B cell (primary cell): ENCODE measurements at regions of chr2 and their contacts with region 1.

Region 1: DNA sequence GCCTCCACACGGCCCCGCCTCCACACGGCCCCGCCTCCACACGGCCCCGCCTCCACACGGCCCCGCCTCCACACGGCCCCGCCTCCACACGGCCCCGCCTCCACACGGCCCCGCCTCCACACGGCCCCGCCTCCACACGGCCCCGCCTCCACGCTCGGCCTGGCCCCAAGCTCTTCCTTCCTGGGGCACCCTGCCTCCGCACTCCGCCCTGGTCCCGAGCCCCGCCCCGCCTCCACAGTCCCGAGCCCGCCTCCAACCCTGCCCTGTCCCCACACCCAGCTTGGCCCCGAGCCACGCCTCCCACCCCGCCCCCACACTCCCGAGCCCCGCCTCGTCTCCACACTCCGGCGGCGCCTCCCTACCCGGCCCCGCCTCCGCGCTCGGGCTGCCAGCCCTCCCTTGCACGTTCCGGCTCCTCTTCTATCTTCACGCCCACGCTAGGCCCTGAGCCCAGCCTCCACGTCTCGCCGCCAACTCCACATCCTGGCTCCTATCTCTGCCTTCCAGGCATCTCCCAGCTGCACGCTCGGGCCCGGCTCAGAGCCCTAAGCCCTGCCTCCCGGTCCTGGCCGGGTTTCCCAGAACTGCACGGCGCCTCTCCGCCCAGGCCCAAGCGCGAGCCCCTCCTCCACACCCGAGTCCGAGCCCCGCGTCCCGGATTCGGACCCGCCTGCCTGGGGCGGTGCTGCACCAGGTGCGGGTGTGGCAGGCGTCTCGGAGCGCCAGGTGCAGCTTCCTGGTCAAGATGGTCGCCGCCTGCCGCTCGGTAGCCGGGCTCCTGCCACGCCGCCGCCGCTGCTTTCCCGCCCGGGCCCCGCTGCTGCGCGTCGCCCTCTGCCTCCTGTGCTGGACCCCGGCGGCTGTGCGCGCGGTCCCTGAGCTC is at the start of gene TMEM87B:
- DNase-seq: peak; percentile 97
- ATAC-seq: peak; percentile 70
- H3K4me3 ChIP-seq: peak within 1 kb of the TSS; percentile 47 to 94 (median 87)
- H3K4me3 Mint-ChIP-seq: peak within 1 kb of the TSS; percentile 99
- H3K27ac ChIP-seq: peak within 1 kb of the TSS; percentile 80 to 87
- H3K27ac Mint-ChIP-seq: peak within 1 kb of the TSS; percentile 98
- H3K4me1 ChIP-seq: peaks cover 18 to 19% of the 10 kb centered on the region in 2 donors
- H3K4me1 Mint-ChIP-seq: peaks cover 41% of the 10 kb centered on the region
- H3K27me3 ChIP-seq: no peaks in the 10 kb centered on the region
- H3K27me3 Mint-ChIP-seq: no peaks in the 10 kb centered on the region
- CTCF ChIP-seq: no peak
- total RNA-seq, gene TMEM87B: 21.0 and 21.1 TPM in 2 replicates

Region 2: DNA sequence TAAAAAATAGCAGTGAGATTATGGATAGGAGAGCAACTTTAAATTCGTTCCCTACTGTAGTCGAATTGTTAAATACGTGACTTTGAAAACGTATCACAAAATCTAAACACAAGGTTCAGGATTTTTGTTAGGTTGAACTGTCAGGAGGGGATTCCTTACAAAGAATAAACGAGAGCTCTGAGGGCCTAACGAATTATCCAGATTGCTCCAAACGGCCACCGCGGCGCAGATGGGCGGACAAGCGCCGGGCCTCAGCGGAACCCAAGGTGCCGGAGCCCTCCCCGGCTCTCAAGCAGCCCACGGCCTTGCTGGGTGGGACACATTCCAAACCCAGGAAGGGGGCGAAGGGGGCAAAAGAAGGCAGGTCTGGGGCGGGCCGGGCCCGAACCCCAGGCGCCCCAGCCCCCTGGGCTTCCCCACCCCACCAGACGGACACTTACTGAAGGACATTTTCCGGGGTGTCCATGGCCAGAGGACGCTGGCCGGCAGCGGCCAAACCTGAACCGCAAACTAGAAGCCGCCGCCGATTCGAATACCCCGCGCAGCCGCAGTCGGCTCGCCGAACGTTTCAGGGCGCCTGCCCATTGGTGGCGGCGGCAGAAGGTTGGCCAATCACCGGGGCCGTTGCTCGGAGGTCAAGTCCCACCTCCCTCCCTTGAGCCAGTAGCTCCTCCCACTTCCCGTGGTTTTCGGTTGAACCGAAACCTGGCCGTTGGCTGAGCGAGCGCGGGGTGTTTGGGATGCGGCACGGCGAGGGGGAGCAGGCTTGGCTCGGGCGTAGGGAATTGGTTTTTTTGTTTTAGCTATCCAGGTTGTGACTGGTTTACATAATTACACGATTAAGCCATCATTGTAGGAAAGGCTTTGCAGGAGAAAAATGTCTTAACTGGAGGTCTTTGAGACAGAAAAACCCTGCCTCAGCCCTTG is 1377.3 kb before region 1 on chr2 and contains the start of gene BUB1:
- CTCF ChIA-PET with region 1: no interaction called
- POLR2A ChIA-PET with region 1: no interaction called
- intact Hi-C with region 1: loop called (anchors 2 kb)
- DNase-seq: peak; percentile 96
- ATAC-seq: peak; percentile 92
- H3K4me3 ChIP-seq: peak within 1 kb of the TSS; percentile 69 to 98 (median 93)
- H3K4me3 Mint-ChIP-seq: peak within 1 kb of the TSS; percentile 96
- H3K27ac ChIP-seq: peak within 1 kb of the TSS; percentile 77 to 81
- H3K27ac Mint-ChIP-seq: peak within 1 kb of the TSS; percentile 91
- H3K4me1 ChIP-seq: peaks cover 34 to 35% of the 10 kb centered on the region in 2 donors
- H3K4me1 Mint-ChIP-seq: peaks cover 40% of the 10 kb centered on the region
- H3K27me3 ChIP-seq: no peaks in the 10 kb centered on the region
- H3K27me3 Mint-ChIP-seq: no peaks in the 10 kb centered on the region
- CTCF ChIP-seq: no peak
- total RNA-seq, gene BUB1: 1.6 and 2.0 TPM in 2 replicates

Region 3: GRCh38 chr2:111958901-111959300 is 96.2 kb before region 1 on chr2:
- CTCF ChIA-PET with region 1: no interaction called
- POLR2A ChIA-PET with region 1: no interaction called
- intact Hi-C with region 1: no loop called
- DNase-seq: no peak
- ATAC-seq: no peak
- H3K4me3 ChIP-seq: no peak overlapping the region
- H3K4me3 Mint-ChIP-seq: no peak overlapping the region
- H3K27ac ChIP-seq: no peak overlapping the region
- H3K27ac Mint-ChIP-seq: no peak overlapping the region
- H3K4me1 ChIP-seq: no peaks in the 10 kb centered on the region
- H3K4me1 Mint-ChIP-seq: no peaks in the 10 kb centered on the region
- H3K27me3 ChIP-seq: peaks cover 0 to 3% (median 0%) of the 10 kb centered on the region in 4 experiments
- H3K27me3 Mint-ChIP-seq: peaks cover 15% of the 10 kb centered on the region
- CTCF ChIP-seq: no peak

Region 4: DNA sequence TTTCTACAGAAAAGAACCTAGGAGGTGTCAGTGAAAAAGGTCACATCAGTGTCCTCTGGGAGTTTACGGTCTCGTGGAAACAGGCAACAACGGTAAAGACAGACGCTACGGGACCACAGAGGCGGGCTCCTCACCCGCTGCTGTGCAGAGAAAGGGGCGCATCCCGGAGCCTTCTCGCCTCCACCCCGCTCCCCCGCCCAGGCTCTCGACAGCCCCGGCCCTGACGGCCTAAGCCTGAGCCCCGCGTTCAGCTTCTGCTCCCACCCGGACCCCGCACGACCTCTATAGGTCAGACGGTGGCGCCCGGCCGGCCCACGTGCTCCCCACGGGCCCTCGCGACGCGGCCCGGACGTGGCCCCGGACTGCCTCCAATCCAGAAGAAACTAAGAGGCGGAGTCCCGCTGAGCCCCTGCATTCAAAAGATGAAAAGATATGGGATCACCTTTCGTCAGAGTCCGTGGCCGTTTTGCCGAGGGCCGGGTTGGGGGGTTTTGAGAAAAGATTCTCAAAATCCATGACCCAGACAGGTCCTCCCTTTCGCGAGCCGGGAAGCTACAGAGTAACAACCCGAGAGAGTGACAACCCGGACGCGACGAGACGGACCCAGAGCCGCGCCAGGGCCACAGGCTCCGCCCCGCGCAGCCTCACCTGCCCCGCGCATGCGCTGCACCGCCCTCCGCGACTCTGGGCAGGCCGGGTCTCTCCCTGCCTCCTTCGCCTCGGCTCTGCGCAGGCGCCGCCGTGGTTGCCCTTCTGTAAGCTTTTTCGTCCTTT is 199.6 kb after region 1 on chr2 and contains the start of gene ZC3H8:
- CTCF ChIA-PET with region 1: interaction called, 4 read pairs
- POLR2A ChIA-PET with region 1: interaction called, 3 read pairs
- intact Hi-C with region 1: loop called (anchors 1 kb)
- DNase-seq: peak; percentile 95
- ATAC-seq: peak; percentile 89
- H3K4me3 ChIP-seq: peak within 1 kb of the TSS; percentile 72 to 84 (median 79)
- H3K4me3 Mint-ChIP-seq: peak within 1 kb of the TSS; percentile 93
- H3K27ac ChIP-seq: peak within 1 kb of the TSS; percentile 83 to 93
- H3K27ac Mint-ChIP-seq: peak within 1 kb of the TSS; percentile 92
- H3K4me1 ChIP-seq: peaks cover 9 to 17% of the 10 kb centered on the region in 2 donors
- H3K4me1 Mint-ChIP-seq: peaks cover 23% of the 10 kb centered on the region
- H3K27me3 ChIP-seq: no peaks in the 10 kb centered on the region
- H3K27me3 Mint-ChIP-seq: no peaks in the 10 kb centered on the region
- CTCF ChIP-seq: no peak
- total RNA-seq, gene ZC3H8: 26.0 and 27.2 TPM in 2 replicates

Region 5: GRCh38 chr2:112542123-112542983 is 487.3 kb after region 1 on chr2 and contains the start of gene POLR1B:
- CTCF ChIA-PET with region 1: no interaction called
- POLR2A ChIA-PET with region 1: no interaction called
- intact Hi-C with region 1: loop called (anchors 1 kb)
- DNase-seq: peak; percentile 88
- ATAC-seq: peak; percentile 80
- H3K4me3 ChIP-seq: peak within 1 kb of the TSS; percentile 65 to 99 (median 94)
- H3K4me3 Mint-ChIP-seq: no peak within 1 kb of the TSS
- H3K27ac ChIP-seq: peak within 1 kb of the TSS; percentile 85 to 94
- H3K27ac Mint-ChIP-seq: no peak within 1 kb of the TSS
- H3K4me1 ChIP-seq: peaks cover 15 to 18% of the 10 kb centered on the region in 2 donors
- H3K4me1 Mint-ChIP-seq: peaks cover 15% of the 10 kb centered on the region
- H3K27me3 ChIP-seq: no peaks in the 10 kb centered on the region
- H3K27me3 Mint-ChIP-seq: no peaks in the 10 kb centered on the region
- CTCF ChIP-seq: no peak
- total RNA-seq, gene POLR1B: 32.5 and 34.2 TPM in 2 replicates

Region 6: GRCh38 chr2:113173542-113174395 is 1118.7 kb after region 1 on chr2 and contains the start of gene PSD4:
- CTCF ChIA-PET with region 1: no interaction called
- POLR2A ChIA-PET with region 1: no interaction called
- intact Hi-C with region 1: loop called (anchors 10 kb)
- DNase-seq: peak; percentile 83
- ATAC-seq: peak; percentile 73
- H3K4me3 ChIP-seq: peak within 1 kb of the TSS; percentile 58 to 95 (median 77)
- H3K4me3 Mint-ChIP-seq: peak within 1 kb of the TSS; percentile 91
- H3K27ac ChIP-seq: peak within 1 kb of the TSS; percentile 87 to 91
- H3K27ac Mint-ChIP-seq: peak within 1 kb of the TSS; percentile 92
- H3K4me1 ChIP-seq: peaks cover 69 to 90% of the 10 kb centered on the region in 2 donors
- H3K4me1 Mint-ChIP-seq: peaks cover 86% of the 10 kb centered on the region
- H3K27me3 ChIP-seq: no peaks in the 10 kb centered on the region
- H3K27me3 Mint-ChIP-seq: no peaks in the 10 kb centered on the region
- CTCF ChIP-seq: no peak
- total RNA-seq, gene PSD4: 203 and 217 TPM in 2 replicates